CD8-positive, alpha-beta T cell (primary cell): ENCODE measurements at regions of chr2 and their contacts with region 1.

Region 1: GRCh38 chr2:238288650-238289573 is 502 bp upstream of the PER2 start:
- DNase-seq: peak; percentile 94 to 99 (median 97)
- ATAC-seq: peak; percentile 85
- H3K4me3 ChIP-seq: peak overlapping the region; percentile 53 to 66
- H3K4me3 Mint-ChIP-seq: peak overlapping the region; percentile 91
- H3K27ac ChIP-seq: peak overlapping the region; percentile 78 to 91
- H3K27ac Mint-ChIP-seq: peak overlapping the region; percentile 96
- H3K4me1 ChIP-seq: peaks cover 25% of the 10 kb centered on the region
- H3K4me1 Mint-ChIP-seq: peaks cover 38% of the 10 kb centered on the region
- H3K27me3 ChIP-seq: no peaks in the 10 kb centered on the region
- H3K27me3 Mint-ChIP-seq: no peaks in the 10 kb centered on the region
- CTCF ChIP-seq: no peak

Region 2: DNA sequence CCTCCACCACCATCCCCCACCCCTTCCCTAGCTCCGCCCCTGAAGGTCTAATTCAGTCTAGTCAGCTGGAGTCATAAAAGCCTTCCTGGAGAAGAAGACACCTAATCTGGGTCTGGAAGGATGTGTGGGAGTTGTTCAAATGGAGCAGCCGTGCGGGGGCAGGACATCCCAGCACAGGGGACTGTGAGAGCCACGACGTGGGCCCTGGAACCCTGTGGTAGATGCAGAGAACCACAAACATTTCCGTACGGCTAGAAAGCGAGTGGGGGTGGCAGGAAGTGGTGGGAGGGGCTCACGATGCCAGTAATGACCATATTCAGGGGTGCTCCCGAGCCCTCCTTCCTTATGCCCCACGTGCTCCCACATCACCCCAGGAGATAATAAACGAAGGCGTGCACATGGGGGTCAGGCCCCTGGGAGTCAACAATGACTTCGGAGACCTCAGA is 854.0 kb before region 1 on chr2:
- CTCF ChIA-PET with region 1: no interaction called
- POLR2A ChIA-PET with region 1: no interaction called
- intact Hi-C with region 1: loop called in 1 of 2 experiments (anchors 5 kb)
- DNase-seq: peak; percentile 26 to 87 (median 78)
- ATAC-seq: peak; percentile 54
- H3K4me3 ChIP-seq: peak overlapping the region; percentile 22 to 56
- H3K4me3 Mint-ChIP-seq: peak overlapping the region; percentile 79
- H3K27ac ChIP-seq: peak overlapping the region; percentile 0 to 44
- H3K27ac Mint-ChIP-seq: peak overlapping the region; percentile 96
- H3K4me1 ChIP-seq: peaks cover 90% of the 10 kb centered on the region
- H3K4me1 Mint-ChIP-seq: peaks cover 86% of the 10 kb centered on the region
- H3K27me3 ChIP-seq: no peaks in the 10 kb centered on the region
- H3K27me3 Mint-ChIP-seq: no peaks in the 10 kb centered on the region
- CTCF ChIP-seq: no peak

Region 3: GRCh38 chr2:237691908-237692600 is 596.9 kb before region 1 on chr2:
- CTCF ChIA-PET with region 1: no interaction called
- POLR2A ChIA-PET with region 1: no interaction called
- intact Hi-C with region 1: loop called in 1 of 2 experiments (anchors 5 kb)
- DNase-seq: peak; percentile 91 to 97 (median 95)
- ATAC-seq: peak; percentile 58
- H3K4me3 ChIP-seq: peak overlapping the region; percentile 80 to 85
- H3K4me3 Mint-ChIP-seq: peak overlapping the region; percentile 81
- H3K27ac ChIP-seq: peak overlapping the region; percentile 81 to 90
- H3K27ac Mint-ChIP-seq: peak overlapping the region; percentile 89
- H3K4me1 ChIP-seq: peaks cover 75% of the 10 kb centered on the region
- H3K4me1 Mint-ChIP-seq: peaks cover 75% of the 10 kb centered on the region
- H3K27me3 ChIP-seq: no peaks in the 10 kb centered on the region
- H3K27me3 Mint-ChIP-seq: no peaks in the 10 kb centered on the region
- CTCF ChIP-seq: no peak

Region 4: GRCh38 chr2:238203094-238203972 is 85.6 kb before region 1 on chr2 and contains the start of gene ILKAP:
- CTCF ChIA-PET with region 1: no interaction called
- POLR2A ChIA-PET with region 1: interaction called, 9 read pairs
- intact Hi-C with region 1: loop called (anchors 1 kb)
- DNase-seq: peak; percentile 78 to 94 (median 90)
- ATAC-seq: peak; percentile 97
- H3K4me3 ChIP-seq: peak within 1 kb of the TSS; percentile 65 to 71
- H3K4me3 Mint-ChIP-seq: peak within 1 kb of the TSS; percentile 89
- H3K27ac ChIP-seq: peak within 1 kb of the TSS; percentile 71 to 84
- H3K27ac Mint-ChIP-seq: peak within 1 kb of the TSS; percentile 92
- H3K4me1 ChIP-seq: peaks cover 43% of the 10 kb centered on the region
- H3K4me1 Mint-ChIP-seq: peaks cover 46% of the 10 kb centered on the region
- H3K27me3 ChIP-seq: no peaks in the 10 kb centered on the region
- H3K27me3 Mint-ChIP-seq: peaks cover 2% of the 10 kb centered on the region
- CTCF ChIP-seq: no peak
- total RNA-seq, gene ILKAP: 133 to 144 TPM

Region 5: DNA sequence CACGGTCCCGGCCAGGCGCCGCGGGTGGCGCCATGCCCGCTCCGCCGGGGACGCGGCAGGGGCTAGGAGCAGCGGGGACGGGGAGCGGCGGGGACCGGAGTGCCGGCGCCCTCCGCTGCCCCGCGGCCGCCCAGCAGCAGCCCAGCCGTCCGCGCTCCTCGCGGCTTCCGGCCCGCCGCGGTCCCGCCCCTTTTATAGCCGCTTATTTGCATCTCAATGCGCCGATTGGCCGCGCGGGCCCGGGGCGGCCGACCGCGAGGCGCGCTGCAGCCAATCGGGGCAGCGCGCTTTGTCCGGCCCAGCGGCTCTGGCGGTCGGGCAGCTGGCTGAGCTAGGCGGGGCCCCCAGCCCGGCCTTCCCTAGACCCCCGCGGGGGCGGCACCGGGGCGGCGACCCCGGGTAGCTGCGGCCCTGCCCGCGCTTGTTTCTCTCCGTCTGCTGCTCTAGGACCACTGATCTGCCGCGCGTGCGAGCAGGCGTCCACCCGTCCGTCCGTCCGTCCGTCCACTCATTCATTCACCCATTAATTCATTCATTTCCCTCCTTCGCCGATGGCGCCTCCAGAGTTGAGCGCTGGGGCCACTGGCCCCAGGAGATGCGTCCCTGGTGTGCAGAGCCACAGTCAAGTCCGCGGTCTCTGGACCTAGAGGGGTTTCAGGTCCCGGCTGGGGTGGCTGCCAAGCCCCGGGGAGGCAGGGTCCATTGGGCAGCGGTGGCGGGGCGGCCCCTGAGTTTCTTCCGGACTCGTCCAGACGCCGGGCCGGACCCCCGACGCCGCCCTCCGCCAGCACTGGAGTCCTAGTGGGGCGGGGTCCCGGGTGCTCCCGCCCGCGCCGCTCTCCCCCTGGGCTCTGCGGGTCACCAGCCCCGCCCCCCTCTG is 48.8 kb before region 1 on chr2 and contains the start of gene HES6:
- CTCF ChIA-PET with region 1: no interaction called
- POLR2A ChIA-PET with region 1: interaction called, 7 read pairs
- intact Hi-C with region 1: loop called (anchors 2 kb)
- DNase-seq: peak; percentile 27 to 88 (median 73)
- ATAC-seq: peak; percentile 74
- H3K4me3 ChIP-seq: peak within 1 kb of the TSS; percentile 51 to 69
- H3K4me3 Mint-ChIP-seq: peak within 1 kb of the TSS; percentile 91
- H3K27ac ChIP-seq: no peak within 1 kb of the TSS
- H3K27ac Mint-ChIP-seq: no peak within 1 kb of the TSS
- H3K4me1 ChIP-seq: peaks cover 11% of the 10 kb centered on the region
- H3K4me1 Mint-ChIP-seq: peaks cover 6% of the 10 kb centered on the region
- H3K27me3 ChIP-seq: peaks cover 0 to 6% of the 10 kb centered on the region in 2 experiments
- H3K27me3 Mint-ChIP-seq: peaks cover 22% of the 10 kb centered on the region
- CTCF ChIP-seq: no peak
- total RNA-seq, gene HES6: 0.98 to 1.5 TPM

Region 6: DNA sequence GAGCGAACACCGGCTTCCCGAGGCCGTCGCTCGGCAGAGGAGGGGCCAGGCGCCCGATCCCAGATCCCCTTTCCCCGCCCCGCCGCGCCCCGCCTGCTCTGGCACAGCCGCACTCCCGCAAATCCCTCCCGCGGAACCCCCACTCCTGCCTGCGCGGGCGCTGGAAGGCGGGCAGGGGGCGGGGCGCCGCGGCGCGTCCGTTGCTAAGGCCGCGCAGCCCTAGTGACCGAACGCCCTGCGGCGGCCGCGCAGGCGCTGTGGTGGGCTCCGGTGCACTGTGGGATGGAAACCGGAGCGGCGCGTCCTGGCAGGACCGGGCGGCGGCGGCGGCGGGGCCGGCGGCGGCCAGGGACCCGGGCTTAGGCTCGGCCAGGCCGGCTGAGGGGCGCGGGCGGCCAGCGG is 31.3 kb after region 1 on chr2 and contains the start of gene TRAF3IP1:
- CTCF ChIA-PET with region 1: no interaction called
- POLR2A ChIA-PET with region 1: no interaction called
- intact Hi-C with region 1: loop called (anchors 1 kb)
- DNase-seq: peak; percentile 70 to 92 (median 84)
- ATAC-seq: peak; percentile 94
- H3K4me3 ChIP-seq: peak within 1 kb of the TSS; percentile 53 to 58
- H3K4me3 Mint-ChIP-seq: peak within 1 kb of the TSS; percentile 84
- H3K27ac ChIP-seq: no peak within 1 kb of the TSS
- H3K27ac Mint-ChIP-seq: peak within 1 kb of the TSS; percentile 22
- H3K4me1 ChIP-seq: peaks cover 19% of the 10 kb centered on the region
- H3K4me1 Mint-ChIP-seq: peaks cover 24% of the 10 kb centered on the region
- H3K27me3 ChIP-seq: no peaks in the 10 kb centered on the region
- H3K27me3 Mint-ChIP-seq: peaks cover 4% of the 10 kb centered on the region
- CTCF ChIP-seq: no peak
- total RNA-seq, gene TRAF3IP1: 6.1 to 8.6 TPM

Region 7: GRCh38 chr2:238426568-238427434 is 137.9 kb after region 1 on chr2 and contains the start of gene ASB1:
- CTCF ChIA-PET with region 1: no interaction called
- POLR2A ChIA-PET with region 1: no interaction called
- intact Hi-C with region 1: loop called (anchors 1 kb)
- DNase-seq: peak; percentile 62 to 94 (median 83)
- ATAC-seq: peak; percentile 78
- H3K4me3 ChIP-seq: peak within 1 kb of the TSS; percentile 66 to 79
- H3K4me3 Mint-ChIP-seq: peak within 1 kb of the TSS; percentile 92
- H3K27ac ChIP-seq: peak within 1 kb of the TSS; percentile 78 to 87
- H3K27ac Mint-ChIP-seq: peak within 1 kb of the TSS; percentile 97
- H3K4me1 ChIP-seq: peaks cover 37% of the 10 kb centered on the region
- H3K4me1 Mint-ChIP-seq: peaks cover 49% of the 10 kb centered on the region
- H3K27me3 ChIP-seq: no peaks in the 10 kb centered on the region
- H3K27me3 Mint-ChIP-seq: no peaks in the 10 kb centered on the region
- CTCF ChIP-seq: no peak
- total RNA-seq, gene ASB1: 16.3 to 25.3 TPM

Region 8: GRCh38 chr2:238509151-238509835 is 220.4 kb after region 1 on chr2:
- CTCF ChIA-PET with region 1: no interaction called
- POLR2A ChIA-PET with region 1: no interaction called
- intact Hi-C with region 1: no loop called
- DNase-seq: no peak
- ATAC-seq: no peak
- H3K4me3 ChIP-seq: no peak overlapping the region
- H3K4me3 Mint-ChIP-seq: no peak overlapping the region
- H3K27ac ChIP-seq: no peak overlapping the region
- H3K27ac Mint-ChIP-seq: no peak overlapping the region
- H3K4me1 ChIP-seq: no peaks in the 10 kb centered on the region
- H3K4me1 Mint-ChIP-seq: no peaks in the 10 kb centered on the region
- H3K27me3 ChIP-seq: no peaks in the 10 kb centered on the region
- H3K27me3 Mint-ChIP-seq: no peaks in the 10 kb centered on the region
- CTCF ChIP-seq: no peak